GM12878 (cell line): ENCODE measurements at regions of chr5 and their contacts with region 1.

Region 1: DNA sequence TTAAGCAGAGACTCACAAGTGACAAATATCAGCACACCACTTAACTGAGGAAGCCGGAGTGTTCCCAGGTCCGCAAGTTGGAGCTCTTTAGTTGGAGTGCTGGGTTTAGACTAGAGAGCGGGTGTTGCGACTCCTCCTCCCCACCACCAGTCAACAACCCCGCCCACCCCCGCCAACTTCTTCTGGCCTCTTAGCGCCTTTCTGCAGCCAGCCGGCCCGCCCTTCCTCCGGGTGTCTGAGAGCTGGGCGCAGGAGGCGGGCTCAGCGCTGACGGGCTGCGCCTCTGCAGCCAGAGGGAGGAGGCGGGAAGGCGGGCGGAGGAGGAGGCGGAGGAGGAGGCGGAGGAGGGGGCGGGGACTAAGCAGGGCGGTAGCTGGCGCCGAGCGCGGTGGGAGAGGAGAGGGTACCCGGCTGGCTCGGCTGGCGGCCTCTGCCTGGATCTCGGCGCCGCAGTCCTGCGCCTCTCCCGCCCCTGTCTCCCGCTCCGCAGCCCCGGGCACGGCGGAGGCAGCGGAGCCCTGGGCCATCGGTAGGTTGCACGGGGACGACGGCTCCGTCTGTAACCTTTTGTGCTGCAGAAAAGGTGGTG is at the start of gene MACIR:
- DNase-seq: peak; percentile 88
- ATAC-seq: peak; percentile 92
- H3K4me3 ChIP-seq: peak within 1 kb of the TSS; percentile 87
- H3K27ac ChIP-seq: peak within 1 kb of the TSS; percentile 34
- H3K4me1 ChIP-seq: peaks cover 3% of the 10 kb centered on the region; the same call in 1 of the 2 replicates
- H3K27me3 ChIP-seq: no peaks in the 10 kb centered on the region
- CTCF ChIP-seq: no peak; a peak in 1 of 6 replicates
- EP300 ChIP-seq: no peak
- POLR2A ChIP-seq: peak; percentile 82
- RAD21 ChIP-seq: 0 out of 2 replicates have a peak, but pooled peaks have one; percentile 2
- polyA plus RNA-seq, gene MACIR: 2.1 to 3.8 TPM

Region 2: DNA sequence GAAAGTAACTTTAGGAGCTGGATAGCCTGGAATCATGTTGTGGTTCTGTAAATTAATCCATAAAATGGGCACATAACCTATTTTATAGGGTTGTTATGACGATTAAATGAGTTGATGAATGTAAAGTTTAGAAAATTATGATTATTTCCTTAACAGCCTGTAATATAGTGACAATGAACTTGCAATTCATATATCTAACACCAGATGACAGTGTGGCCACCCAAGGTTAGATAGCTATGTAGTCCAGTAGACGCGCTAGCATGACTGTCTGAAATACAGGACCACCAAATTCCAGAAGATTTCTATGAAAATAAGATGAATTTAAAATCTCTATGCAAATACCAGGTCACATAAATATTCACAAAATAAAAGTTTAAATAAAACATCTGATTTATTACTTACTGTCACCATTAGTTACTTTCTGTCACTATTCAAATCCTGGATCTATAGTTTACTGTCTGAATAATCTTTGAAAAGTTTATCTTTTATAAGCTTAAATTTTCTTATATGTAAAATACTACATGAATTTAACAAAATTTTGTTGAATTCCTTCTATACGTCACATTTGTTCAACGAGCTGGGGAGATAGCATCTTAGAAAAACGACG is 26.0 kb before region 1 on chr5:
- CTCF ChIA-PET with region 1: interaction called, 11 read pairs
- POLR2A ChIA-PET with region 1: no interaction called
- RAD21 ChIA-PET with region 1: interaction called, 6 read pairs
- SMC1A ChIA-PET with region 1: interaction called, 9 read pairs
- in situ Hi-C with region 1: no loop called
- intact Hi-C with region 1: no loop called
- DNase-seq: no peak
- ATAC-seq: peak; percentile 90
- H3K4me3 ChIP-seq: no peak overlapping the region
- H3K27ac ChIP-seq: no peak overlapping the region
- H3K4me1 ChIP-seq: no peaks in the 10 kb centered on the region
- H3K27me3 ChIP-seq: no peaks in the 10 kb centered on the region
- CTCF ChIP-seq: peak; percentile 74 to 81 (median 78)
- EP300 ChIP-seq: no peak
- POLR2A ChIP-seq: no peak
- RAD21 ChIP-seq: peak; percentile 88

Region 3: GRCh38 chr5:103271570-103272289 is 13.3 kb after region 1 on chr5:
- CTCF ChIA-PET with region 1: interaction called, 10 read pairs
- POLR2A ChIA-PET with region 1: interaction called, 6 read pairs
- RAD21 ChIA-PET with region 1: interaction called, 34 read pairs
- SMC1A ChIA-PET with region 1: interaction called, 64 read pairs
- in situ Hi-C with region 1: no loop called
- intact Hi-C with region 1: no loop called
- DNase-seq: no peak
- ATAC-seq: peak; percentile 61
- H3K4me3 ChIP-seq: peak overlapping the region; percentile 51; the same call in 1 of the 2 replicates
- H3K27ac ChIP-seq: peak overlapping the region; percentile 47; the same call in 1 of the 2 replicates
- H3K4me1 ChIP-seq: peaks cover 10% of the 10 kb centered on the region
- H3K27me3 ChIP-seq: no peaks in the 10 kb centered on the region
- CTCF ChIP-seq: no peak
- EP300 ChIP-seq: no peak
- POLR2A ChIP-seq: no peak
- RAD21 ChIP-seq: no peak

Region 4: GRCh38 chr5:103340717-103341388 is 82.4 kb after region 1 on chr5:
- CTCF ChIA-PET with region 1: interaction called, 4 read pairs
- POLR2A ChIA-PET with region 1: no interaction called
- RAD21 ChIA-PET with region 1: interaction called, 3 read pairs
- SMC1A ChIA-PET with region 1: interaction called, 6 read pairs
- in situ Hi-C with region 1: no loop called
- intact Hi-C with region 1: loop called (anchors 2 kb)
- DNase-seq: peak; percentile 79
- ATAC-seq: peak; percentile 95
- H3K4me3 ChIP-seq: peak overlapping the region; percentile 23; the same call in 1 of the 2 replicates
- H3K27ac ChIP-seq: peak overlapping the region; percentile 56; the same call in 1 of the 2 replicates
- H3K4me1 ChIP-seq: peaks cover 13% of the 10 kb centered on the region; the same call in 1 of the 2 replicates
- H3K27me3 ChIP-seq: no peaks in the 10 kb centered on the region
- CTCF ChIP-seq: no peak
- EP300 ChIP-seq: peak in 1 of 2 experiments; percentile 64; a peak in 1 of 4 replicates
- POLR2A ChIP-seq: no peak
- RAD21 ChIP-seq: no peak